ENCODE measurements at regions of chr19 and their contacts with region 1.

Region 1: GRCh38 chr19:12139885-12140547 is at the start of gene ZNF20:
- DNase-seq: peak; percentile 90 to 92
- ATAC-seq: peak; percentile 95 to 98 (median 96)
- H3K4me3 ChIP-seq: peak within 1 kb of the TSS; percentile 76
- H3K4me3 Mint-ChIP-seq: peak within 1 kb of the TSS; percentile 95
- H3K27ac ChIP-seq: peak within 1 kb of the TSS; percentile 56
- H3K27ac Mint-ChIP-seq: peak within 1 kb of the TSS; percentile 79 to 90
- H3K4me1 ChIP-seq: peaks cover 27% of the 10 kb centered on the region
- H3K4me1 Mint-ChIP-seq: peaks cover 35 to 38% of the 10 kb centered on the region in 2 donors
- H3K27me3 ChIP-seq: no peaks in the 10 kb centered on the region
- H3K27me3 Mint-ChIP-seq: no peaks in the 10 kb centered on the region
- CTCF ChIP-seq: no peak
- total RNA-seq, gene ZNF20: 4.2 to 9.0 (median 4.6) TPM

Region 2: DNA sequence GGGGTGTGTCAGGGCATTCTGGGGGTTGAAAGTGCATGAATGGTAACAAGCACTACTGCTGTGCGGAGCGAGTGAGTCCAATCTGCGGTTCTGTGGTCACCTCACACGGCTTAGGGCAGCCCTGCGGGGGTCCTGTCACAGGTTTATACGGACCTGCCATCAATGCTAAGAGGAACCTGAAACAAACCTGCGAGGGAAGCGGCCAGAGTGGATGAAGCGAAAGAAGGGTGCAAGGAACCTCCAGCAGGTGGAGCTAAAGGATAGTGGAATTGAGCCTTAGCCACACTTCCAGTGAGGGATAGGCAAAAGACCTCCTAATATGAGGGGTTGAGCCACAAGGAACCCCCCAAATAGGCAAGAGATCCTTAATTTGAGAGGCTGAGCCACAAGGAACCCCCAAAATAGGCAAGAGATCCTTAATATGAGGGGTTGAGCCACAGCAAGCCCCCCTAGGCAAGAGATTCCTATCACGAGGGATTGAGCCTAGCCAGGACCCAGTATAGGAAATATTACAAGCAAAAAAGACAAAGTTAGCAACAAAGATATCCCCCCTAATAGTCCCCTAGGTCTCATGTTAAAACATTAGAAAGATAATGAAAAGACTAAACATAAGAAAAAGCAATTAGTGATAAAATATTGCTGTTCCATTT is 258.7 kb before region 1 on chr19:
- intact Hi-C with region 1: loop called (anchors 1 kb)
- DNase-seq: peak; percentile 43 to 84
- ATAC-seq: peak; percentile 59 to 84 (median 82)
- H3K4me3 ChIP-seq: no peak overlapping the region
- H3K4me3 Mint-ChIP-seq: no peak overlapping the region
- H3K27ac ChIP-seq: no peak overlapping the region
- H3K27ac Mint-ChIP-seq: no peak overlapping the region
- H3K4me1 ChIP-seq: peaks cover 3% of the 10 kb centered on the region
- H3K4me1 Mint-ChIP-seq: peaks cover 5 to 8% of the 10 kb centered on the region in 2 donors
- H3K27me3 ChIP-seq: no peaks in the 10 kb centered on the region
- H3K27me3 Mint-ChIP-seq: peaks cover 0 to 8% of the 10 kb centered on the region in 2 donors
- CTCF ChIP-seq: peak; percentile 73

Region 3: GRCh38 chr19:11964858-11965645 is 175.0 kb before region 1 on chr19 and contains the start of gene ZNF763:
- intact Hi-C with region 1: loop called (anchors 1 kb)
- DNase-seq: peak; percentile 90 to 92
- ATAC-seq: peak; percentile 89 to 94 (median 90)
- H3K4me3 ChIP-seq: peak within 1 kb of the TSS; percentile 86
- H3K4me3 Mint-ChIP-seq: peak within 1 kb of the TSS; percentile 90
- H3K27ac ChIP-seq: peak within 1 kb of the TSS; percentile 91
- H3K27ac Mint-ChIP-seq: peak within 1 kb of the TSS; percentile 95
- H3K4me1 ChIP-seq: peaks cover 18% of the 10 kb centered on the region
- H3K4me1 Mint-ChIP-seq: peaks cover 22 to 28% of the 10 kb centered on the region in 2 donors
- H3K27me3 ChIP-seq: no peaks in the 10 kb centered on the region
- H3K27me3 Mint-ChIP-seq: no peaks in the 10 kb centered on the region
- CTCF ChIP-seq: no peak
- total RNA-seq, gene ZNF763: 4.8 to 7.7 (median 5.8) TPM

Region 4: GRCh38 chr19:12055783-12056182 is 84.2 kb before region 1 on chr19:
- intact Hi-C with region 1: loop called (anchors 1 kb)
- DNase-seq: no peak
- ATAC-seq: no peak
- H3K4me3 ChIP-seq: no peak overlapping the region
- H3K4me3 Mint-ChIP-seq: no peak overlapping the region
- H3K27ac ChIP-seq: no peak overlapping the region
- H3K27ac Mint-ChIP-seq: no peak overlapping the region
- H3K4me1 ChIP-seq: peaks cover 18% of the 10 kb centered on the region
- H3K4me1 Mint-ChIP-seq: peaks cover 12 to 18% of the 10 kb centered on the region in 2 donors
- H3K27me3 ChIP-seq: no peaks in the 10 kb centered on the region
- H3K27me3 Mint-ChIP-seq: peaks cover 7 to 11% of the 10 kb centered on the region in 2 donors
- CTCF ChIP-seq: no peak

Region 5: GRCh38 chr19:12090807-12091206 is 49.2 kb before region 1 on chr19:
- intact Hi-C with region 1: loop called (anchors 2 kb)
- DNase-seq: peak; percentile 57 to 73
- ATAC-seq: peak; percentile 53 to 70 (median 62)
- H3K4me3 ChIP-seq: no peak overlapping the region
- H3K4me3 Mint-ChIP-seq: peak overlapping the region; percentile 61
- H3K27ac ChIP-seq: no peak overlapping the region
- H3K27ac Mint-ChIP-seq: peak overlapping the region; percentile 70 to 73
- H3K4me1 ChIP-seq: peaks cover 15% of the 10 kb centered on the region
- H3K4me1 Mint-ChIP-seq: peaks cover 11 to 12% of the 10 kb centered on the region in 2 donors
- H3K27me3 ChIP-seq: no peaks in the 10 kb centered on the region
- H3K27me3 Mint-ChIP-seq: no peaks in the 10 kb centered on the region
- CTCF ChIP-seq: peak; percentile 66